Esophagus muscularis mucosa (tissue), 4 donors: ENCODE measurements at regions of chrX and their contacts with region 1.

Region 1: GRCh38 chrX:120477453-120477852 is 8.4 kb upstream of the LAMP2 start:
- DNase-seq: no peak
- H3K4me3 ChIP-seq: no peak overlapping the region
- H3K27ac ChIP-seq: no peak overlapping the region
- H3K4me1 ChIP-seq: no peaks in the 10 kb centered on the region
- H3K27me3 ChIP-seq: no peaks in the 10 kb centered on the region
- CTCF ChIP-seq: no peak
- EP300 ChIP-seq: no peak
- POLR2A ChIP-seq: no peak

Region 2: DNA sequence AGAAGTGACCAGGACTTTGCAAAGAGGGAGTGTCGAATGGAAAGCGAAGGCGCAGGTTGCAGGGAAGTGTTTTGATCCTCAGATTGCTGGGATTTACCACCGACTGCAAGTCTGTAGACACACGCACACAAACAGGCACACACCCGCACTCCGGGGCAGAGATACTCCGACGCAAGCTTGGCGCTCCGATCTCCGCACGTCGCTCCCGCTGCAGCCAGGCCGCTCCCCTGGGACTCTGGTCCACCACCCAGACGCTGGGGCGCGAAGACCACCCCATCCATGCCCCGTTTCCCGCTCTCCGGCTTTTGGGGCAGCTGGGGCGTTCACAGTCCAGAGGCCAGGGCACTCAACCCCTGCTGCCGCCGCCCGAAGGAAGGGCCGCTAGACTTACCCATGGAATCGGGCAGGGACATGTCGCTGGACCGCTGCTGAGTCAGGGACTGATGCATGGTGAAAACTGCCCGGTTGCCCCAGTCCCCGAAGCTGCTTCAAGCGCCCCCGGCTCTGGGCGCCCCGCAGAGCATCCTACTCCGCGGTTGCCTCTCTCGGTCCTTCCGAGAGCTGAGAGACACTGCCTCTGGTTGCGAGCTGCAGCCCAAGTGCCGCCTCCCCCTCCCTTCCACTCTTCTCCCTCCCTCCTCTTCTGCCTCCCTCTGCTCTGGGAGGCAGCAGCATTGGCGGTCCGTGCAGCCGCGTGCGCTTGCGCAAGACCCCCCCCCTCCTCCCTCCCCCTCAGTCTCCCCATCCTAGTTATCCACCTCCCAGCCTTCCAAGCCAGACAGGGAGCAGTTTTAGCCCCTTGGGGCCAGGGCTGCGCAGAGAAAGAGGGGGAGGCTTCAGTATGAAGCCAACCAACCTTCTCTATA is 166.4 kb before region 1 on chrX and contains the start of gene TMEM255A:
- intact Hi-C with region 1: loop called (anchors 10 kb)
- DNase-seq: no peak
- H3K4me3 ChIP-seq: peak within 1 kb of the TSS; percentile 36 to 56 (median 45)
- H3K27ac ChIP-seq: no peak within 1 kb of the TSS
- H3K4me1 ChIP-seq: peaks cover 4 to 29% (median 28%) of the 10 kb centered on the region in 4 donors
- H3K27me3 ChIP-seq: peaks cover 0 to 49% (median 12%) of the 10 kb centered on the region in 4 donors
- CTCF ChIP-seq: no peak
- EP300 ChIP-seq: no peak
- POLR2A ChIP-seq: no peak
- total RNA-seq, gene TMEM255A: 1.2 to 4.7 (median 4.2) TPM

Region 3: GRCh38 chrX:120372667-120373370 is 104.6 kb before region 1 on chrX:
- intact Hi-C with region 1: loop called (anchors 10 kb)
- DNase-seq: no peak
- H3K4me3 ChIP-seq: no peak overlapping the region
- H3K27ac ChIP-seq: no peak overlapping the region
- H3K4me1 ChIP-seq: peaks cover 0 to 7% (median 3%) of the 10 kb centered on the region in 4 donors
- H3K27me3 ChIP-seq: no peaks in the 10 kb centered on the region
- CTCF ChIP-seq: no peak
- EP300 ChIP-seq: no peak
- POLR2A ChIP-seq: no peak